Esophagus muscularis mucosa (tissue), 4 donors: ENCODE measurements at regions of chr9 and their contacts with region 1.

Region 1: GRCh38 chr9:134641173-134641985 is at the start of gene COL5A1:
- DNase-seq: peak; percentile 97
- H3K4me3 ChIP-seq: peak within 1 kb of the TSS; percentile 87 to 94 (median 89)
- H3K27ac ChIP-seq: peak within 1 kb of the TSS; percentile 96 to 99 (median 98)
- H3K4me1 ChIP-seq: peaks cover 25 to 57% (median 50%) of the 10 kb centered on the region in 4 donors
- H3K27me3 ChIP-seq: peaks cover 0 to 4% (median 0%) of the 10 kb centered on the region in 4 donors
- CTCF ChIP-seq: peak; percentile 17 to 44 (median 21)
- EP300 ChIP-seq: no peak
- POLR2A ChIP-seq: peak; percentile 69
- total RNA-seq, gene COL5A1: 36.0 to 89.5 (median 56.4) TPM

Region 2: DNA sequence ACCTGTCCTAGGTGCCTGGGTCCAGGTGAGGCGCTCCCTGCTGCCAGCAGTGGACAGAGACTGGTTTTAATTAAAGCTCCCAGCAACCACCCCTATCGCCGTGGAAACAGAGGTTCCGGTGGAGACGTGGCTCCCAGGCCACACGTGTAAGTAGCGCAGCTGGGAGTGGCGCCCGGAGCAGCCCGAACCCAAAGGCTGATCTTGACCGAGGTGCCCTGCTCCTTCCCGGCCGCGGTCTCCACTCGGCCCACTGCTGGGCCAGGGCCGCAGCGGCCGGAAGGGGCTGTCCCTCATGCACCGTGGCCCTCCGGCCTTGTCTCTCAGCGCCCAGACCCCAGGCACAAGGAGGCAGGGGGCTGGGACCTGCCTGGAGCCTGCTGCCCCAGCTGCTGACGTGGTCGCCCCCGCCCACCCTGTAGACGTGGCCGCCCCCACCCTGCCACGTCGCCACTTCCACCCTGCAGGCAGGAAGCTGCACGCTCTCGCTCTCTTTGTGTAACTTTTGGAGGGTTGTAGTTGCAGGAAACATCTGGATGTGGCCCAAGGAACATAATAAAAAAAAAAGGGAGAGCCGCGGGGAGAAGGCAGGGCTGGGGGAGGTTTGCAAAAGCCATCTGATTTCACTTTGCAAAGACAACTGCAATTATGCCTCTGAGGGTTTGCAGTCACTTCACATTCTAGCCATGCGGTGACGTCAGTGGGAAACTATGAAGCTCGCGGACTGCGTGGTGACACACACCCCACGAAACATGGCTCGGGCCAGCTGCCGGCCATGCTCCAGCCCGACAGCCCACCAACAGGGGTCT is 185.2 kb before region 1 on chr9:
- intact Hi-C with region 1: loop called (anchors 5 kb)
- DNase-seq: peak; percentile 95
- H3K4me3 ChIP-seq: peak overlapping the region; percentile 36 to 51 (median 44)
- H3K27ac ChIP-seq: peak overlapping the region; percentile 84 to 89 (median 84)
- H3K4me1 ChIP-seq: peaks cover 30 to 53% (median 41%) of the 10 kb centered on the region in 4 donors
- H3K27me3 ChIP-seq: no peaks in the 10 kb centered on the region
- CTCF ChIP-seq: no peak
- EP300 ChIP-seq: no peak
- POLR2A ChIP-seq: no peak

Region 3: DNA sequence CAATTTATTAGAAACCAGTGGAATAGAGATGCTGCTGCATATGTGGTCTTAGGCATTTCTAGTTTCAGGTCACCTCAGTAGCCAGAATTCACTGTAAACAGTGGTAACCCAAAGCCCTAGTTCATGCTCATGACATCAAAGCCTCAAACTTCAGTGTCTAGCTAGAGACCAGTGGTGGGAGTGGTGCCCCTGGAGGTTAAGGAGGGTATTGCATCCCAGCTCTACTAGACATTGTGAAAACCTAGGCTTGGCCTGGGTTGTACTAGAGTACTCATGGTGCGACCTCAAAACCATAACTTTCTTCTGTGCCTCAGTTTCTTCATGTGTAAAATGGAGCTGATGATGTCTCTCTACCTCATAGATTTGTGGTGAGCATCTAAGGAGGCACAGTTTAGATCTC is 19.0 kb after region 1 on chr9:
- intact Hi-C with region 1: loop called (anchors 2 kb)
- DNase-seq: no peak
- H3K4me3 ChIP-seq: no peak overlapping the region
- H3K27ac ChIP-seq: peak overlapping the region; percentile 78 to 87 (median 86)
- H3K4me1 ChIP-seq: peaks cover 41 to 82% (median 80%) of the 10 kb centered on the region in 4 donors
- H3K27me3 ChIP-seq: no peaks in the 10 kb centered on the region
- CTCF ChIP-seq: peak in 2 of 3 experiments; percentile 25 to 55
- EP300 ChIP-seq: no peak
- POLR2A ChIP-seq: no peak